Lower lobe of right lung (tissue), 2 donors: ENCODE measurements at regions of chr14 and their contacts with region 1.

Region 1: GRCh38 chr14:61475316-61475715 is 153.9 kb downstream of the PRKCH start:
- DNase-seq: no peak
- ATAC-seq: peak in 1 of 2 donors; percentile 43
- H3K4me3 ChIP-seq: no peak overlapping the region
- H3K27ac ChIP-seq: peak overlapping the region; percentile 83
- H3K4me1 ChIP-seq: peaks cover 98% of the 10 kb centered on the region
- H3K27me3 ChIP-seq: no peaks in the 10 kb centered on the region
- CTCF ChIP-seq: peak; percentile 71

Region 2: GRCh38 chr14:61525293-61526011 is 50.1 kb after region 1 on chr14:
- intact Hi-C with region 1: loop called (anchors 10 kb)
- DNase-seq: peak; percentile 70
- ATAC-seq: peak; percentile 80 to 82
- H3K4me3 ChIP-seq: no peak overlapping the region
- H3K27ac ChIP-seq: peak overlapping the region; percentile 74
- H3K4me1 ChIP-seq: peaks cover 54% of the 10 kb centered on the region
- H3K27me3 ChIP-seq: no peaks in the 10 kb centered on the region
- CTCF ChIP-seq: no peak

Region 3: GRCh38 chr14:61706096-61706690 is 230.9 kb after region 1 on chr14:
- intact Hi-C with region 1: no loop called
- DNase-seq: no peak
- ATAC-seq: no peak
- H3K4me3 ChIP-seq: no peak overlapping the region
- H3K27ac ChIP-seq: no peak overlapping the region
- H3K4me1 ChIP-seq: peaks cover 35% of the 10 kb centered on the region
- H3K27me3 ChIP-seq: no peaks in the 10 kb centered on the region
- CTCF ChIP-seq: no peak

Region 4: GRCh38 chr14:61719344-61720293 is 244.3 kb after region 1 on chr14:
- intact Hi-C with region 1: loop called (anchors 5 kb)
- DNase-seq: no peak
- ATAC-seq: peak in 1 of 2 donors; percentile 32
- H3K4me3 ChIP-seq: no peak overlapping the region
- H3K27ac ChIP-seq: no peak overlapping the region
- H3K4me1 ChIP-seq: peaks cover 48% of the 10 kb centered on the region
- H3K27me3 ChIP-seq: no peaks in the 10 kb centered on the region
- CTCF ChIP-seq: no peak